ENCODE measurements at regions of chr1 and their contacts with region 1.

Region 1: DNA sequence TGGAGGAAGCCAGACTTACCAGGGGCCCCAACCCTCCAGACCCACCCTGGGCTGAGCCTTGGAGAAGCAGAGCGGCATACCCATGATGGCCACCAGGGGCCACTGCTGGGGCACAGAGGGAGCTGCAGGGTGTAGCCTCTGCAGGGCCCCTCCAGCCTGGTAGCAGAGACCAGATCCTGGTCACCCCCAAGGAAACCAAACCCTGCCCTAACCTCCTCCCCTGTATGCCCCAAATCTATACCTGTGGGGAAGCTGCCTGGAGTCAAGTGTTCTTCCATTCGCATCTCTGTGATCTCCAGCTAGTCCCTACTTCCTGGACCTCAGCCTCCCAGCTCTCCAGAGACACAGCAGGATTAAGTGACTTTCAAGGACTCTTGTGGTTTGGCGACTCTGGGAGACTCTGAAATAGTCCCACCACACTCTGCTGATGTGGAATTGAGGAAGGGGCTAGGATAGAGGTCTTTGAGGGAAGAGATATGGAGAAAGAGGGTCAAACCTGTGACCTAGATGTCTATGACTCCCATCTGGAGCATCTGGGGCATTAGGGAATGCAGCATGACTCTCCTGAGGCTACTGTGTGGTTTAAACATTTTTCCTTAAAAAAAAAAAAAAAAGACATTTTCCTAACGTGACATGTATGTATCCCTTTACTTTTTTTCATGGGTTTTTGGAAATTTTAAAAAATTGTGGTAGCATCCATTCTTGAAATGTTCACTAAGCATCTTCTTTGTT is 119.2 kb upstream of the IPO9 start:
- DNase-seq: peak; percentile 74
- H3K4me3 ChIP-seq: no peak overlapping the region
- H3K27ac ChIP-seq: peak overlapping the region; percentile 13
- H3K4me1 ChIP-seq: peaks cover 67% of the 10 kb centered on the region
- H3K27me3 ChIP-seq: no peaks in the 10 kb centered on the region
- CTCF ChIP-seq: peak; percentile 90

Region 2: DNA sequence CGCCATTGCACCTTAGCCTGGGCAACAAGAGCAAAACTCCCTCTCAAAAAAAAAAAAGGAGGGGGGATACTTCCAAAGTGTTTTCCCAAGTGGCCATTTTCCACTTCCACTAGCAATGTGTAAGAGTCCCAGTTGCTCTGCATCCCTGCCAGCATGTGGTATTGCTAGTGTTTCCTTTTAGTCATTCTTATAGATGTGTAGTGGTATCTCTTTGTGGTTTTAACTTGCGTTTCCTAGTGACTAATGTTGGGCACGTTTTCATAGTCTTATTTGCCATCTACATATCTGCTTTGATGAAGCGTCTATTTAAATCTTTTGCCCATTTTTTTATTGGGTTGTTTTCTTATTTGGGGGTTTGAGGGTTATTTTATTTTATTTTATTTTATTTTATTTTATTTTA is 783.9 kb before region 1 on chr1:
- CTCF ChIA-PET with region 1: no interaction called
- POLR2A ChIA-PET with region 1: no interaction called
- intact Hi-C with region 1: no loop called
- DNase-seq: no peak
- H3K4me3 ChIP-seq: no peak overlapping the region
- H3K27ac ChIP-seq: no peak overlapping the region
- H3K4me1 ChIP-seq: no peaks in the 10 kb centered on the region
- H3K27me3 ChIP-seq: no peaks in the 10 kb centered on the region
- CTCF ChIP-seq: no peak

Region 3: DNA sequence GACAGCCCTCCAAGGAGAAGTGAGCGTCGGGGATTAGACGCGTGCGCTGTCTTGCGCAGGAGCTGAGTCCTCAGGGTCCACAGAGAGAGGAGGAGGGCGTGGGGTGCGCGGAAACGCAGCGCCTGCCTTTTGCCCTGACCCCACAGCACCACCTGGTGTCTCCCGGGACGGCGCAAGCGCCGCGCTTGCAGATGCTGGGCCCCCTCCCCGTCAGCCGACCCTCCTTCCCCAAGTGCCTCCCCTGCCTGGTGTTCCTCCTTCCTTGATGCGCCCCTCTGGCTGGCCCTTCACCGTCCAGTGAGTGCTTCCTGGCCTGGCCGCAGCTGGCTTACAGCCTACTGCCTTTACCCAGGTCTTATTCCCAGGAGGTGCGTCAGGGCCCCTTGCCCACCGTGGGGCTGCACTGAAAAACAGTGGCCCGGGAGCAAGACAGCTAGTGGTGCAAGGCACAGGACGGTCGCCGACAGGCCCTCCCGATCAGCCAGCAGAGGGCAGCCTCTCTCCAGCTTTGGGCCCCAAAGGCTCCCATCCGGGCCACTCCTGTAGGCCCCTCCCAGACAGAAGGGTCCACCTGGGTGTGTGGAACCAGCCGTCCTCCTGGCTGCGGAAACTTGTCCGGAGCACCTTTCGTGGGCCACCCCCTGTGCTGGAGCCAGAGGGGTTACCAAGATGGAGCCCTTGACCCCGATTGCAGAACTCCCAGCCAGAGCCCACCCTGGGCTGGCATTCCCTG is 227.8 kb before region 1 on chr1:
- CTCF ChIA-PET with region 1: interaction called, 7 read pairs
- POLR2A ChIA-PET with region 1: no interaction called
- intact Hi-C with region 1: loop called (anchors 5 kb)
- DNase-seq: peak; percentile 89
- H3K4me3 ChIP-seq: peak overlapping the region; percentile 27
- H3K27ac ChIP-seq: peak overlapping the region; percentile 43
- H3K4me1 ChIP-seq: peaks cover 45% of the 10 kb centered on the region
- H3K27me3 ChIP-seq: no peaks in the 10 kb centered on the region
- CTCF ChIP-seq: peak; percentile 95

Region 4: DNA sequence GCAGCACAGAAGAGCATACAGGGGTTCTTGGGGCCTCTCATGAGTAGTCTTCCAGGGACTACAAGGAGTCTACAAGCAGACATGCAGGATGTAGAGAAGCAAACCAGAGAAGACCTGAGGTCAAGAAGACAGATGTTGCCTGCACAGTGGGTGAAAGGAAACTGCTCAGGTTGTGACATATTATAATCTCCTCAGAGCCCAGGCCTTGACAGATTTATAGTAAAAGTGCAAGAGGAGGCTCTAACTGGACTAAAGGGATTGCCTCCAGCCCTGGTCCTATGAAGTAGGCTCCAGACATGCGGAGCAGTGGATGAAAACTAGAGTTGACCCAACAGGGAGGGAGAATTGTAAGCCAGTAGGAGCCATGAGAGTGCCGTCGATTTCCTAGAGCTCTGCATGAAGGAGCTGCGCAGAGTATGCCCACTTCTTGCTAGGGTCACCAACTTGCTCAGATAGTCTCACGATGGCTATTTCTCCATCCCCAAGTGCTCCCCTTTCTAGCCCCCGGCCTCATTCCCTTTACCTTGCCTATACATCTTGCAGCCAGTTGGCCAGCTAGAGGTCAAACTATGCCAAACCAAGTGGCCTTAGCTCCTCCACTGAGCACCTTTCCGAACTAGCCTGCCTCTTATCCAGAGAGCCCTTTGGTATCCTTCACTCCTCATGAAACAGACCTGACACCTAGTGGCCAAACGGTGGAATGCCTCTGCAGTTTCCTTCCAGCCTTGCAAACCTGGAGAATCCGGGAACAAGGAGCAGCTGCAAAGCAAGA is 83.0 kb after region 1 on chr1:
- CTCF ChIA-PET with region 1: interaction called, 104 read pairs
- POLR2A ChIA-PET with region 1: interaction called, 3 read pairs
- intact Hi-C with region 1: loop called (anchors 1 kb)
- DNase-seq: peak; percentile 91
- H3K4me3 ChIP-seq: no peak overlapping the region
- H3K27ac ChIP-seq: peak overlapping the region; percentile 78
- H3K4me1 ChIP-seq: peaks cover 40% of the 10 kb centered on the region
- H3K27me3 ChIP-seq: no peaks in the 10 kb centered on the region
- CTCF ChIP-seq: peak; percentile 98

Region 5: GRCh38 chr1:201877877-201878401 is 168.2 kb after region 1 on chr1:
- CTCF ChIA-PET with region 1: no interaction called
- POLR2A ChIA-PET with region 1: no interaction called
- intact Hi-C with region 1: loop called (anchors 5 kb)
- DNase-seq: peak; percentile 72
- H3K4me3 ChIP-seq: no peak overlapping the region
- H3K27ac ChIP-seq: no peak overlapping the region
- H3K4me1 ChIP-seq: no peaks in the 10 kb centered on the region
- H3K27me3 ChIP-seq: no peaks in the 10 kb centered on the region
- CTCF ChIP-seq: peak; percentile 69

Region 6: GRCh38 chr1:201946224-201946908 is 236.6 kb after region 1 on chr1 and contains the start of gene LMOD1:
- CTCF ChIA-PET with region 1: no interaction called
- POLR2A ChIA-PET with region 1: no interaction called
- intact Hi-C with region 1: no loop called
- DNase-seq: peak; percentile 73
- H3K4me3 ChIP-seq: peak within 1 kb of the TSS; percentile 35
- H3K27ac ChIP-seq: no peak within 1 kb of the TSS
- H3K4me1 ChIP-seq: peaks cover 8% of the 10 kb centered on the region
- H3K27me3 ChIP-seq: no peaks in the 10 kb centered on the region
- CTCF ChIP-seq: no peak
- total RNA-seq, gene LMOD1: 0.20 TPM in 1 of 2 replicates, not detected in the other

Region 7: DNA sequence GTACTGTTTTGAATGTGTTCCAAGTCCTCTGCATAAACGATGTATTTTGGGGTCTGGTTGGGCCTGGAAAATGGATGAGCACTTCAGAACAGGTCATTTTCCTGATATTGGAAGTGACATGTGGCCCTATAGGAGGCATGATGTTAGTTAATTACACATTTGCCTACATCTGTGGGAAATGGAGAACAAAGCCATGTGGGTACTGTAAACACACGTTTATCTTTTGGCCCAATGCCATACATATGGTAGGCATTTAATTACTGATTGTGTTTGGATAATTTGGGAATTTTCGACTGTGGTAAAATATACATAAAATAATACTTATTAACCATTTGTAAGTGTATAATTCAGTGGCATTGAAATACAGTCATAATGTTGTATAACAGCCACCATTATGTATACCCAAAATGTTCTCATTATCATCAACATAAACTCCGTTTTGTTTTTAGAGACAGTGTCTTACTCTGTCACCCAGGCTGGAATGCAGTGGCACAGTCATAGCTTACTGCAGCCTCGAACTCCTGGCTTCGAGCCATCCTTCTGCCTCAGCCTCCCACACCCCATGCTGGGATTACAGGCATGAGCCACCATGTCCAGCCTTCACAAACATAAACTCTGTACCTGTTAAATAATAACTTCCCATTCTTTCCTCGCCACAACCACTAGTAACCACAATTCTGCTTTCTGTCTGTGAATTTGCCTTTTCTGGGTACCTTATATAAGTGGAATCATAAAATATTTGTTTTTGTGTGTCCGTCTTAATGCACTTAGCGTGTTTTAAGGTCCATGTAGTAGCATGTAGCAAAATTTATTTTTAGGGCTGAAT is 260.8 kb after region 1 on chr1:
- CTCF ChIA-PET with region 1: no interaction called
- POLR2A ChIA-PET with region 1: no interaction called
- intact Hi-C with region 1: loop called (anchors 10 kb)
- DNase-seq: no peak
- H3K4me3 ChIP-seq: no peak overlapping the region
- H3K27ac ChIP-seq: no peak overlapping the region
- H3K4me1 ChIP-seq: no peaks in the 10 kb centered on the region
- H3K27me3 ChIP-seq: no peaks in the 10 kb centered on the region
- CTCF ChIP-seq: no peak